ENCODE measurements at regions of chr4 and their contacts with region 1.

Region 1: DNA sequence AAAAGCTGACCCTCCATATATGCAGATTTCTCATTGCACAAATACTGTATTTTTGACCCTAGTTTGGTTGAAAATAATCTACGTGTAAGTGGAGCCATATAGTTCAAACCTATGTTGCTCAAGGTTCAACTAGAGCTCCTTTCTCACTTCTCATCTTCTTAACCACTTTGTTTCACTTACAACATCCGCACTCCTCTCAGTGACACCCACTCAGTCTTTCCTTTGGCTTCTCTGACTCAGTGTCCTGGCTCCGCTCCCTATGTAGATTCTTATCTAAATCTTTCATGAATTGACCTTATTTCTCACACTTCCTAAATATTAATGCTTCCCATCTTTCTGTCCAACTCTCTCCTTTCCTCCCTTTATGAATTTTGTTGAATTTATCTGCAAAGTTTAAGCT is 32.9 kb upstream of the DKK2 start:
- DNase-seq: no peak
- H3K4me3 ChIP-seq: no peak overlapping the region
- H3K27ac ChIP-seq: no peak overlapping the region
- H3K4me1 ChIP-seq: no peaks in the 10 kb centered on the region
- H3K27me3 ChIP-seq: no peaks in the 10 kb centered on the region
- CTCF ChIP-seq: no peak
- EP300 ChIP-seq: no peak
- POLR2A ChIP-seq: no peak
- RAD21 ChIP-seq: no peak

Region 2: DNA sequence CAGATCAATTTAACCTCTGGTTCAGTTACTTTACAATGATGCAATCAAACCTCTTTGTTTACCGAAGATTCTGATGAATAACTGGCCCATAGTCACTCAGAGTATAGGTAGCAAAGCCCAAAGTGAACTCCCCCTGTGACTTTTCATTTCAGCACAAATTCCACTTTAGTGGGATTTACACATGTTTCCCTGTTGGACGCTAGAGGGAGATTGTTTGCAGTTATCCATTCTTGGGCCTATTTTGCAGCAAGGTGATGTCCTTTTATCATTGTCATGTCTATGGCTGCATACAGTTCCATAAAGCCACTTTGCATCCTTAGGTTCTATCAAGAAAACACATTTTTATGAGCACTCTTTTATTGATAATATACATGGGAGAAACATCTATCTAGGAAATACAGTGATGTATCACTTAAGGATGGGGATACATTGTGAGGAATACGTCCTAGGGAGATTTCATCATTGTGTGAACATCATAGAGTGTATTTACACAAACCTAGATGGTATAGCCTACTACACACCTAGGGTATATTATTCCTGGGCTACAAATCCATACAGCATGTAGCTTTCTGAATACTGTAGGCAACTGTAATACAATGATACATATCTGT is 18.4 kb before region 1 on chr4:
- CTCF ChIA-PET with region 1: interaction called, 24 read pairs
- POLR2A ChIA-PET with region 1: no interaction called
- DNase-seq: no peak
- H3K4me3 ChIP-seq: no peak overlapping the region
- H3K27ac ChIP-seq: no peak overlapping the region
- H3K4me1 ChIP-seq: no peaks in the 10 kb centered on the region
- H3K27me3 ChIP-seq: no peaks in the 10 kb centered on the region
- CTCF ChIP-seq: peak in 2 of 3 experiments; percentile 50 to 64; a peak in 3 of 4 replicates
- EP300 ChIP-seq: no peak
- POLR2A ChIP-seq: no peak
- RAD21 ChIP-seq: peak; percentile 42 to 54

Region 3: DNA sequence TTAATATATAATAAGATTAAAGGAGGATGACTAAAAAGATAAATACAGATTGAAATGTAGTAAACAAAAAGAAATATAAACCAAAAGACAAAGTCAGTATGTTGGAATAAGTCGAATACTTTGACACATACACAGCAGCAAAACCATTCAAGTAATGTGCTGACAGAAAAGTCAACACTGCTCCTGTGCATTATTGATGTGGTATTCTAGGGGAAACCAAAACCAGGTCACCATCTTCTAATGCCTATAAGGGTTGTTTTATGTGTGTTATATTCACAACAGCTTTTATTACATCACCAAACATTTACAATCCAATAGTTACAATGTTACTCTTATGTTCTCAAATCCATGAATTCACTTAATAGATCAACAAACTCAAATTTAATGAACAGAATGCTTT is 78.8 kb after region 1 on chr4:
- CTCF ChIA-PET with region 1: no interaction called
- POLR2A ChIA-PET with region 1: no interaction called
- DNase-seq: no peak
- H3K4me3 ChIP-seq: no peak overlapping the region
- H3K27ac ChIP-seq: no peak overlapping the region
- H3K4me1 ChIP-seq: peaks cover 0 to 12% (median 0%) of the 10 kb centered on the region in 4 experiments; a peak in 1 of 7 replicates
- H3K27me3 ChIP-seq: no peaks in the 10 kb centered on the region
- CTCF ChIP-seq: no peak
- EP300 ChIP-seq: no peak
- POLR2A ChIP-seq: no peak
- RAD21 ChIP-seq: no peak